H1 (cell line): ENCODE measurements at regions of chr11 and their contacts with region 1.

Region 1: GRCh38 chr11:96197801-96198701 is 144.9 kb downstream of the MAML2 start:
- DNase-seq: no peak
- H3K4me3 ChIP-seq: no peak overlapping the region
- H3K27ac ChIP-seq: no peak overlapping the region
- H3K4me1 ChIP-seq: peaks cover 0 to 11% (median 5%) of the 10 kb centered on the region in 4 experiments; a peak in 3 of 7 replicates
- H3K27me3 ChIP-seq: no peaks in the 10 kb centered on the region
- CTCF ChIP-seq: no peak
- EP300 ChIP-seq: no peak
- POLR2A ChIP-seq: no peak
- RAD21 ChIP-seq: no peak

Region 2: GRCh38 chr11:96185220-96185768 is 12.8 kb before region 1 on chr11:
- CTCF ChIA-PET with region 1: interaction called, 5 read pairs
- POLR2A ChIA-PET with region 1: interaction called, 12 read pairs
- DNase-seq: no peak
- H3K4me3 ChIP-seq: no peak overlapping the region
- H3K27ac ChIP-seq: no peak overlapping the region
- H3K4me1 ChIP-seq: peaks cover 2 to 7% (median 4%) of the 10 kb centered on the region in 4 experiments; a peak in 4 of 7 replicates
- H3K27me3 ChIP-seq: no peaks in the 10 kb centered on the region
- CTCF ChIP-seq: no peak
- EP300 ChIP-seq: no peak
- POLR2A ChIP-seq: no peak
- RAD21 ChIP-seq: no peak

Region 3: GRCh38 chr11:96228473-96228891 is 30.4 kb after region 1 on chr11:
- CTCF ChIA-PET with region 1: no interaction called
- POLR2A ChIA-PET with region 1: no interaction called
- DNase-seq: no peak
- H3K4me3 ChIP-seq: no peak overlapping the region
- H3K27ac ChIP-seq: no peak overlapping the region
- H3K4me1 ChIP-seq: no peaks in the 10 kb centered on the region
- H3K27me3 ChIP-seq: no peaks in the 10 kb centered on the region
- CTCF ChIP-seq: no peak
- EP300 ChIP-seq: no peak
- POLR2A ChIP-seq: no peak
- RAD21 ChIP-seq: no peak